CD8-positive, alpha-beta T cell (primary cell): ENCODE measurements at regions of chr2 and their contacts with region 1.

Region 1: DNA sequence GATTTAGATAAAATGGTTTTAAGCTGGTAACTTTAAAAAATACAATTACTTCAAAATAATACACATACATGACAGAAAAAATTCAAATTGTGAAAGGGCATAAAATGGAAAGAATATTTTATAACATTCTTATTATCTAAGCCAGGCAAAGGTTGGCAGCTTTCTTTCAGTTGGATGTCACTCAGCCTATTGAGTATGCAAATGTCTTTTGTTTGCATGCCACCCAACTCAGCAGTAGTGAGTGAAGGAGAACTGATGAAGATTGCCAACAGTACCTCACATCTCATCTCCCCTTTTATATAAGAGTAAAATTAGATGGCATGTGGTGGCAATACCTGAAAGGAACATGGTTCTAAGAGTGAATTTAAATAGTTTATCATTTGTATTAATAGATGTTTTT is 24.8 kb downstream of the BMPR2 start:
- DNase-seq: no peak
- ATAC-seq: no peak
- H3K4me3 ChIP-seq: no peak overlapping the region
- H3K4me3 Mint-ChIP-seq: no peak overlapping the region
- H3K27ac ChIP-seq: no peak overlapping the region
- H3K27ac Mint-ChIP-seq: no peak overlapping the region
- H3K4me1 ChIP-seq: no peaks in the 10 kb centered on the region
- H3K4me1 Mint-ChIP-seq: peaks cover 6% of the 10 kb centered on the region
- H3K27me3 ChIP-seq: no peaks in the 10 kb centered on the region
- H3K27me3 Mint-ChIP-seq: no peaks in the 10 kb centered on the region
- CTCF ChIP-seq: no peak

Region 2: DNA sequence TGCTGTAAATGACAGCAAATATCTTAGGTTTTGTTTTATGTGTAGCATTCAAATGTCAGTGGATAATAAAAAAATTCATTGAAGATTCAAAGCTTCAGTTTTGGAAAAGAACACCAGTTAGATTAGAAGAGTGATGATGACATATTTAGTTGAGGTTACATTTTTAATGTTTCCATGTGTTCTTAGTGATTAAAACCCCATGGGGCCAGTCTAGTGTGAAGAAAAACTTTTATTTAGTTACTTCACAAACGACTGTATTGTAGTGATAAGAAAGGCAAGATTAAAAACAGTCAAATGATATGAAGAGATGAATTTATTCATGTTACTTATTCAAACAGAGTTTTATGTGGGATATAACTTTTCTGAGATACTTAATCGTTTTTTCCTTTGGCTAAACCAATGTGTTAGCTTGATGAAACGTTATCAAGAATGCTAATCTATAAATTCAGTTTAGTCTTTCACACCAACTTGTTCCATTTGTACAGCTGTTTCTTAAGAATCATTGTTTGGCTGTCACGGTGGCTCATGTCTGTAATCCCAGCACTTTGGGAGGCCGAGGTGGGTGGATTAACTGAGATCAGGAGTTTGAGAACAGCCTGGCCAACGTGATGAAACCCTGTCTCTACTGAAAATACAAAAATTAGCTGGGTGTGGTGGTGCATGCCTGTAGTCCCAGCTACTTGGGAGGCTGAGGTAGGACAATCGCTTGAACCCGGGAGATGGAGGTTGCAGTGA is 13.2 kb before region 1 on chr2:
- CTCF ChIA-PET with region 1: no interaction called
- POLR2A ChIA-PET with region 1: interaction called, 10 read pairs
- intact Hi-C with region 1: no loop called
- DNase-seq: no peak
- ATAC-seq: no peak
- H3K4me3 ChIP-seq: no peak overlapping the region
- H3K4me3 Mint-ChIP-seq: no peak overlapping the region
- H3K27ac ChIP-seq: no peak overlapping the region
- H3K27ac Mint-ChIP-seq: no peak overlapping the region
- H3K4me1 ChIP-seq: no peaks in the 10 kb centered on the region
- H3K4me1 Mint-ChIP-seq: peaks cover 18% of the 10 kb centered on the region
- H3K27me3 ChIP-seq: no peaks in the 10 kb centered on the region
- H3K27me3 Mint-ChIP-seq: no peaks in the 10 kb centered on the region
- CTCF ChIP-seq: no peak

Region 3: DNA sequence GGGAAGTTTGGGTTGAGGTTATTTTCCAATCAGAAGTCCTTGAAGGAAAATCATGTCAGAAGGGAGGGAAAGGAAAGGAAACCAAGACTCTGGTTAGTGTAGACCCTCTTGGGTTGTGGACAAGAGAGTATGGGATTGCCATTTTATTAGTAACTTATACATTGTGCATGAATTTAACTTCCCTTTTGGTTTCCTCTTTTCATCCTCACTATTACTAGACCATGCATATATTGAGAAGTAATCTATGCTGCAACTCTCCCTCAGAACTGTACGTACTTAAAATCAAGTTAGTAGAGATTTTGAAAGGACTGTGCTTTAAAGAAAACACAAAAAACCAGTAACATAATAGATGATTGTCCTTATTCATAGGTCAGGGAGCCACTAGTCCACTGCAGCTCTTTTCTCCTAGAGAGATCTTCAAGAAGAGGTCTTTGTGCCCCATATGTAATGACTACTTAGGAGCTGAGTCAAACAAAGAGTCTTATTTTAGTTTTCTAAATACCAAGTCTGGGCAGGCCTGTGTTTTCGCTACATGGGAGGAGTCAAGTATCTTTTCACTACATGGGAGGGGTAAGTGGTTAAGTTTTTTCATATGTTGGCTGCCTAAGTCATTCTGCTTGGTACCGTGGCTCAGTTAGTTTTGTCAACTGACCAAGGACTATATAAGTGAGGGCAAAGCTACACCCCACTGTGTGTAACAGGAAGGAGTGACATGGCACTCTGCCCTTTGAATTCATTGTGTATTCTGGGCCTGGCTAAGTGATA is 208.6 kb after region 1 on chr2:
- CTCF ChIA-PET with region 1: no interaction called
- POLR2A ChIA-PET with region 1: no interaction called
- intact Hi-C with region 1: no loop called
- DNase-seq: no peak
- ATAC-seq: no peak
- H3K4me3 ChIP-seq: no peak overlapping the region
- H3K4me3 Mint-ChIP-seq: no peak overlapping the region
- H3K27ac ChIP-seq: no peak overlapping the region
- H3K27ac Mint-ChIP-seq: no peak overlapping the region
- H3K4me1 ChIP-seq: no peaks in the 10 kb centered on the region
- H3K4me1 Mint-ChIP-seq: no peaks in the 10 kb centered on the region
- H3K27me3 ChIP-seq: no peaks in the 10 kb centered on the region
- H3K27me3 Mint-ChIP-seq: no peaks in the 10 kb centered on the region
- CTCF ChIP-seq: no peak